ENCODE measurements at regions of chr6 and their contacts with region 1.

Region 1: GRCh38 chr6:99393698-99394531 is at the start of gene COQ3:
- DNase-seq: peak; percentile 90
- ATAC-seq: peak; percentile 96
- H3K4me3 Mint-ChIP-seq: peak within 1 kb of the TSS; percentile 93
- H3K27ac Mint-ChIP-seq: peak within 1 kb of the TSS; percentile 99
- H3K4me1 Mint-ChIP-seq: peaks cover 7% of the 10 kb centered on the region
- H3K27me3 Mint-ChIP-seq: no peaks in the 10 kb centered on the region
- CTCF ChIP-seq: no peak
- total RNA-seq, gene COQ3: 13.9 to 16.0 TPM (median 14.1 TPM) in 3 replicates

Region 2: GRCh38 chr6:99092009-99092408 is 301.9 kb before region 1 on chr6:
- CTCF ChIA-PET with region 1: no interaction called
- POLR2A ChIA-PET with region 1: no interaction called
- DNase-seq: no peak
- ATAC-seq: no peak
- H3K4me3 Mint-ChIP-seq: no peak overlapping the region
- H3K27ac Mint-ChIP-seq: no peak overlapping the region
- H3K4me1 Mint-ChIP-seq: peaks cover 7% of the 10 kb centered on the region
- H3K27me3 Mint-ChIP-seq: peaks cover 9% of the 10 kb centered on the region; the same call in 1 of the 2 replicates
- CTCF ChIP-seq: no peak

Region 3: GRCh38 chr6:99349171-99350141 is 44.5 kb before region 1 on chr6 and contains the start of gene FAXC:
- CTCF ChIA-PET with region 1: interaction called, 6 read pairs
- POLR2A ChIA-PET with region 1: interaction called, 17 read pairs
- DNase-seq: peak; percentile 75
- ATAC-seq: peak; percentile 78
- H3K4me3 Mint-ChIP-seq: peak within 1 kb of the TSS; percentile 81
- H3K27ac Mint-ChIP-seq: peak within 1 kb of the TSS; percentile 65; the same call in 1 of the 2 replicates
- H3K4me1 Mint-ChIP-seq: peaks cover 34% of the 10 kb centered on the region
- H3K27me3 Mint-ChIP-seq: peaks cover 10% of the 10 kb centered on the region
- CTCF ChIP-seq: no peak
- total RNA-seq, gene FAXC: 10.2 to 12.9 TPM (median 11.1 TPM) in 3 replicates

Region 4: DNA sequence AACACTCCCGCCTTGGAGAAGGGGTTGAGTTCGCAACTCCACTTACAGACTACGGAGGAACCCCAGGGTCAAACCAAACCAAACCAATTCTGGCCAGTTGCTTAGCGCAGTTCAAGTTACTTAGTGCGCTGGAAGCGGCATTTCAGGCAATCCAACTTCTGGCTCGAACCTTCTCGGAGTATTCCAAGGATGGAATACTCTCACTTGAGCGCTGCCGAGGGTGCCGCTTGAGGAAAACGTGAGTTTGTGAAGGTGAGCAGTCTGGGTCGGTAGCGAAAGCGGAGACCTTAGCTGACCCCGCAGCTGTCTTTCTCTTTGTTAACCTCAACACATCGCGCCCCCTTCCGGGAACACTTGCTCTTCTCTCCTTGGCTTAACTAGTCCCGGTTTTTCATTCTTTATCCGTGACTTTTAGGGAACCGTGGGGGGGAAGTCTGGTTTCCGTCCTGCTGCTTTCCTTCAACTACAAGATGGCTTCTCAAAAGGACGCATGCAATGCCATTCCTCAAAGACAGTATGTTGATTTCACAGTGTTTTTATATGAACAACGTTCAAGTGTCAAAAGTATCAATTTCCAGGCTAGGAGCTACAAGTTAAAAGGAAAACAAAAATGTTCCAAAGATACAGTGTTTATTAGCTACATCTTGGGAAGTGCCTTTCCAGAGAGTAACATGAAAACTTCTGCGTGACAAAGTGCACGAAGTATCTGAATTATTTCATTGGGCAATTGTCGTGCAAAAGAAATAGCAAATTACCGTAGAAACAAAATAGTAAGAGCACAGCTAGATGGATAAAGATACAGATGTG is 31.9 kb after region 1 on chr6:
- CTCF ChIA-PET with region 1: interaction called, 5 read pairs
- POLR2A ChIA-PET with region 1: interaction called, 10 read pairs
- DNase-seq: peak; percentile 93
- ATAC-seq: peak; percentile 80
- H3K4me3 Mint-ChIP-seq: peak overlapping the region; percentile 97
- H3K27ac Mint-ChIP-seq: peak overlapping the region; percentile 100
- H3K4me1 Mint-ChIP-seq: peaks cover 72% of the 10 kb centered on the region
- H3K27me3 Mint-ChIP-seq: no peaks in the 10 kb centered on the region; the same call in 1 of the 2 replicates
- CTCF ChIP-seq: no peak

Measured in WTC11 (cell line).